Sigmoid colon (tissue), 7 donors: ENCODE measurements at regions of chr6 and their contacts with region 1.

Region 1: DNA sequence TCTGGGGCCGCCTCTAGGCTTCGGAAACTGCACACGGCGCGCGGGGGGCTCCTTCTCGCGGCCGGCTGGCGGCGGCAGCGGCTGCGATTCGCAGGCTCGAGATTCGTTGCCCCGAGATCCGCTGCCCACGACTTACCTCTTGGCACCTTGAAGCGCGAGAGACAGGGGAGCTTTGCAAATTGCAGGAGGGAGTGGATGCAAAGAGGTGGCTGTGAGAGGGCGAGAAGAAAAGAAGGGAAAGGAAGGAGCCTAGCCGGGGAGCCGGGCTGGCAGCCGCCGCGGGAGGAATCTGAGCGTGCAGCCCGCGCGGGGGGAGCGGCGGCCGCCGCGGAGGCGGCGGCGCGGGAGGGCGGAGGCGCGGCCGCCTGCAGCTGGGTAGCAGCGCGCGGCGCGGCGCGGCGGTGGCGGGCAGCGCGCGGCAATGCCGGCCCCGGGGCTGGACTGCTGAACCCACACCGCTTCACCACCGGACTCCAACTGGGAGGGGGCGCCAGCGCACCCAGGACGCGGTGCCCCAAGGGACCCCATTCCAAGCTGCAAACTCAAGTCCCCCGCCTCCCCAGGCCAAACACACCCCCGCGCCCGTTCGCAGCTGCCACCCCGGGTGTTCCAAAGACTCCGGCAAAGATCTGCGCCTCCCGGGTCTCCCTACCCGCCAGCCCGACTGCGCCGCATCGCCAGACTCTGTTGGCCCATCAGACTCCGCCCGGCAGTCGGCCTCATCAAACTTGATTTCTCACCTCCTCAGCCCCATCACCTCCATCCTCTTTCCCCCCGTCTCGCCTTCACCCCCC is 44.2 kb upstream of the SUPT3H start:
- DNase-seq: peak; percentile 78
- H3K4me3 ChIP-seq: peak overlapping the region; percentile 51 to 70 (median 60)
- H3K27ac ChIP-seq: peak overlapping the region; percentile 34 to 80 (median 76)
- H3K4me1 ChIP-seq: peaks cover 0 to 50% (median 40%) of the 10 kb centered on the region in 4 donors
- H3K27me3 ChIP-seq: peaks cover 8 to 47% (median 18%) of the 10 kb centered on the region in 3 donors
- CTCF ChIP-seq: peak in 1 of 4 experiments; percentile 37
- EP300 ChIP-seq: no peak
- POLR2A ChIP-seq: no peak

Region 2: DNA sequence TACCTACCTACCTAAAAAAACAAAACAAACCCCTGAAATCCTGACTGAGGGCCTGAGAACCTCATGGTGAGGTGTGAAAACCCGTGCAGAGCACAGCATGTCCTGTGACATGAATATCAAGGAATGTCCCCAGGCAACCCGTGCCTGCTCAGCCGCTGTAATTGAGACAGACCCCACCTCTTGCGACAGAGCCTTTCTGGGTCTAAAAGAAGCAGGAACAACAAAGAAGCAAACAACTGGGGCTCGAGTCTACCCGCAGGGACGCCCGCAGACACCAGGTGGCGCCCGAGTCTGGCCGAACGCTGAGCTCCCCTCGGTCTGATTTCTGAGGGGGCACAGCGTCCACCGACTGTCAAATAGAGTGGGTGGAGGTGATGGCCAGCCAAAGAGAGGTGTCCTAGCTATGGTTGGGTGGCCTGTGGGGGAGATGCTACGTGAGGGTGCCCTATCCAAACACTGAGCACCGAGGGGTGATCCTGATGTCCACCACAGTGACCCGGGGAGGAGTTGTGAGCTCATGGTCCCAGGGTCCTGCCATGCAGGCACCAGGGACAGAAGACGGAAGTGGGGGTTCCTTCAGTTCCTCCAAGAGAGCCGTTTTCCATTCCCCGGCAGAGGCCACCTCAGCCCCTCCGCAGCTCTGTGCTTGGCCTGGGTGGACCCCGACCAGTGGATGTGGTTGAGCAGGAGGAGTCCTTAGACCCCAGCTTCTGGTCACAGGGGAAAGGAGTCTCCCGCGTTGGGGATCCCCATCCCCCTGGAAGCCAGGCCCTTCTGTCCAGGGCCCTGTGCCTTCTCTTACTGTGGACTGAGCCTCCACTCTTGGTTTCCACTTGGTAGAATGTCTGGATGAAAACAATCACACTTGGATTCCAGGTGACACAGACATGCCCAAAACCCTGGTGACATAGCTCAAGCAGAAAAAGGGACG is 766.2 kb before region 1 on chr6:
- intact Hi-C with region 1: loop called (anchors 5 kb)
- DNase-seq: peak; percentile 93
- H3K4me3 ChIP-seq: no peak overlapping the region
- H3K27ac ChIP-seq: no peak overlapping the region
- H3K4me1 ChIP-seq: peaks cover 0 to 24% (median 16%) of the 10 kb centered on the region in 4 donors
- H3K27me3 ChIP-seq: no peaks in the 10 kb centered on the region
- CTCF ChIP-seq: peak; percentile 76 to 93 (median 90)
- EP300 ChIP-seq: peak in 2 of 4 donors; percentile 39 to 84
- POLR2A ChIP-seq: no peak

Region 3: DNA sequence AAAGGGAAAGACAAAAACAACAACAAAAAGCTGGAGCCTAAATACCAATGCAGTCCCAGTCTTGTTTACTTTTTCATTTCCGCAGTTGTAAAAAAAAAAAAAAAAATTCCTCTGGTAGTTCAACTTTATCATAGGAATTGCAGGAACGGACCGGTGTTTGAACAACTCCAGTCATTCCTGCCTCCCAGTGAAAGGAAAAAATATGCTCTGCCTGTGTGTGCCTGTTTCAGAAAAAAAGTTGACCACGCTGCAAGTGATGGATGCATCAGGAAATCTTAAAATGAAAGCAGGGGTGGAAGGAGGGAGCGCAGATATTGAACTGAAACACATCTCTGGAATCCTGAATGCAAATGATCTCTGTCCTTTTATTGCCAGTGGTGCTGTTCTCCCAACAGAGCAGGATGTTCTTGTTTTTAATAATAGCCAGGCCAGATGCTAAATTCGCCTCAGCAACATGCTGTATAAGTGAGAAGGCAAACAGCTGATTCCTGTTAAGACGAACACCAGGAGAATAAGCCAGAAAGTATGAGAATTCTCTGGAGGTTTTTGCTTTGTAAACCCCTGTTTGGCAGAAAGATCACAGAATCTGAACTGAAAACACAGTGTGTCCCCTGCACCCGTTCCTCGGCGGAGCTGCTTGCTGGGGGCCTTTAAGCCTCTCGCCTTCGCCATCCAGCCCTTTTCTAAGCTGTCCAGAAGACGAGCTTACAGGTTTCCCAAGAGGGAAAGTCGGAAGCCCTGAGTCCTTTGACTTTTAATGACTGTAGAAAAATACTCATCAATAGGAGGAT is 134.3 kb after region 1 on chr6:
- intact Hi-C with region 1: loop called (anchors 10 kb)
- DNase-seq: peak; percentile 73
- H3K4me3 ChIP-seq: peak overlapping the region in 3 of 4 donors; percentile 21 to 32 (median 22)
- H3K27ac ChIP-seq: peak overlapping the region in 3 of 4 donors; percentile 69 to 82 (median 81)
- H3K4me1 ChIP-seq: peaks cover 0 to 23% (median 17%) of the 10 kb centered on the region in 4 donors
- H3K27me3 ChIP-seq: no peaks in the 10 kb centered on the region
- CTCF ChIP-seq: no peak
- EP300 ChIP-seq: peak in 1 of 4 donors; percentile 53
- POLR2A ChIP-seq: no peak

Region 4: DNA sequence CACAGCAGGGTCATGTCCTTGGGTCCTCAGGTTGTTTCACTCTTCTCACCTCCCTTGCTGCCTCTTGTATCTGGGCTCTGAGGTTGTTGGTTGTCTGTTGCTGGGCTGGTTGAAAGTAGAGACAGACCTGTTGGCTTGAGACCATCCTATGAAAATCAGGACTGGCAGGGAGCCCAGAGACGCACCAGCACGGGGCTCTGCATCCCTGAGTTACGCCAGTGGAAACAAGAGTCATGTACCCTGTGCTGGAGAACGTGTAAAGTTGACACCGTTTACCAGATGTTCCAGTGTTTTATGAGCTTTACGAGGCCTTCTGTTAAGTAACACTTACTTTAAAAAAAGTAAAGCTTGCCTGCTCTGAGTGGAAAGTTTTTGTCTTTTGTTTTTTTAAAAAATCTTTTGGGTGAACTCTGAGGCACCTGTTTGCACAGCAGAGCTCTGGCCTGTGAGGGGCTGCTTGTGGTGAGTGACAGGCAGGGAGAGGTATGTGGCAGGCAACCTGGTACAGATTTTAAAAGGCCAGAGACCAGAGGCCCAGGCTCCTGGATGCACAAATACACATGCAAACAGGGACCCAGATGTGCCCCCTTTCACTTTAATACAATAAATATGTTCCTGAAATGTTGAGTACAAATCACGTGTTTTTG is 215.8 kb after region 1 on chr6:
- intact Hi-C with region 1: loop called (anchors 5 kb)
- DNase-seq: peak; percentile 97
- H3K4me3 ChIP-seq: no peak overlapping the region
- H3K27ac ChIP-seq: peak overlapping the region in 3 of 4 donors; percentile 80 to 83 (median 82)
- H3K4me1 ChIP-seq: peaks cover 0 to 36% (median 33%) of the 10 kb centered on the region in 4 donors
- H3K27me3 ChIP-seq: no peaks in the 10 kb centered on the region
- CTCF ChIP-seq: no peak
- EP300 ChIP-seq: peak; percentile 98 to 99 (median 99)
- POLR2A ChIP-seq: no peak

Region 5: DNA sequence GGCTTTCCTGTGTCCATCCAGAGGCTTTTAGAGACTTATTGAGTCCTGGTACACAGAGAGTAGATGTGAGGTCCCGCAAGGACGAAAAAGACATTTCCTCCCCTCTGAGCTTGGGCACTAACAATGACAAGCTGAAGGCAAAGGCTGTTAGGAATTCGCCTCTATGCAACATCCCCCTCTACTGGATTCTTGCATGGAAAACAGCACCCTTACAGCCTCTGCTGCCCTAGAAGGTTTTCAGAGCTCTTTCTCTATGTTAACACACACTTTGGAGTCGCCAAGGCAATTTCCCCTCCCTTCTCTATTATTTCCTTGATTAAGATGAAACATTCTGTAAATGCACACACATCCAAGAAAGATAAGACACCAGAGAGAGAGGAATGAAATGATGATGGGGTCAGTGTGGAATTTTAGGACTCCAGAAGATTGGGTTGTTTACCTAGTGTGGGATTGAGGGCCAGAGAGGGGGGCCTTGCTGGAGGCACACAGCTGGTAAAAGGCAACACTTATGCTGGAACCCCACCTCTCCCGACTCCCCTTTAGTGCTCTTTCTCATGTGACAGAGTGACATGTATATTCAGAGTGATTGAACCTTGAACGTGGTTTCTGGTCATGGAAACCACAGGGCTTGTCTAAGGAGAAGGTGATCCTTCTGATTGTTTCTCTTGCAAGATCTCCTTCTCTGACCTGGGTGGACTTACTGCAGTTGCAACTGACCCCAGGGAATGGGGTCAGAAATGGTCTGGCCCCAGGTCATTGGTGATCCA is 293.0 kb after region 1 on chr6:
- intact Hi-C with region 1: loop called (anchors 1 kb)
- DNase-seq: peak; percentile 77
- H3K4me3 ChIP-seq: no peak overlapping the region
- H3K27ac ChIP-seq: peak overlapping the region in 1 of 4 donors; percentile 5
- H3K4me1 ChIP-seq: peaks cover 0 to 16% (median 10%) of the 10 kb centered on the region in 4 donors
- H3K27me3 ChIP-seq: no peaks in the 10 kb centered on the region
- CTCF ChIP-seq: peak; percentile 75 to 80 (median 78)
- EP300 ChIP-seq: no peak
- POLR2A ChIP-seq: no peak

Region 6: DNA sequence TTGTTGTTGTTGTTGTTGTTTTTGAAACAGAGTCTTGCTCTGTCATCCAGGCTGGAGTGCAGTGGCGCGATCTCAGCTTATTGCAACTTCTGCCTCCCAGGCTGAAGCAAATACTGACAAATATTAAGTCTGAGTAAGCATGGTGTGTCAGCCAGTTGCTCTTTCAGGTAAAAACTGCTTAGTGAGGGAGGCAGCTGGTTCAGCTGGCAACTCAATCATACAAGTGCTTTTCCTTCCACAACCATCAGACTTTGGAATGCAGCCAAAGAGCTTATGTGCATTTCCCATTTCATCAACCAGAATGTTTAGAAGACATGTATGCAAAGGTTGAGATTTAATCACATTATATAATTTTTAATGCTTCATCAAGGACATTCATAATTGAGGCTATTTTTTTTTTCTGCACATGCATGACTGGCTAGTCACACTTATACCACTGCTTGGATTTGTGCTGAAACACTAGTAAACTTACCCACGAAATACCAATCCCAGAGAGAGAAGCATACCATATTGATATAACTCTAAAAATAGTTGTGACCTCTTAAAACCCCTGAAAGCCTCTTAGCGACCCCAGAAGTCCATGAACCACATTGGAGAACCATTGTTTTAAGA is 537.7 kb after region 1 on chr6:
- intact Hi-C with region 1: no loop called
- DNase-seq: no peak
- H3K4me3 ChIP-seq: no peak overlapping the region
- H3K27ac ChIP-seq: no peak overlapping the region
- H3K4me1 ChIP-seq: no peaks in the 10 kb centered on the region
- H3K27me3 ChIP-seq: no peaks in the 10 kb centered on the region
- CTCF ChIP-seq: no peak
- EP300 ChIP-seq: no peak
- POLR2A ChIP-seq: no peak